ENCODE measurements at regions of chr17 and their contacts with region 1.

Region 1: DNA sequence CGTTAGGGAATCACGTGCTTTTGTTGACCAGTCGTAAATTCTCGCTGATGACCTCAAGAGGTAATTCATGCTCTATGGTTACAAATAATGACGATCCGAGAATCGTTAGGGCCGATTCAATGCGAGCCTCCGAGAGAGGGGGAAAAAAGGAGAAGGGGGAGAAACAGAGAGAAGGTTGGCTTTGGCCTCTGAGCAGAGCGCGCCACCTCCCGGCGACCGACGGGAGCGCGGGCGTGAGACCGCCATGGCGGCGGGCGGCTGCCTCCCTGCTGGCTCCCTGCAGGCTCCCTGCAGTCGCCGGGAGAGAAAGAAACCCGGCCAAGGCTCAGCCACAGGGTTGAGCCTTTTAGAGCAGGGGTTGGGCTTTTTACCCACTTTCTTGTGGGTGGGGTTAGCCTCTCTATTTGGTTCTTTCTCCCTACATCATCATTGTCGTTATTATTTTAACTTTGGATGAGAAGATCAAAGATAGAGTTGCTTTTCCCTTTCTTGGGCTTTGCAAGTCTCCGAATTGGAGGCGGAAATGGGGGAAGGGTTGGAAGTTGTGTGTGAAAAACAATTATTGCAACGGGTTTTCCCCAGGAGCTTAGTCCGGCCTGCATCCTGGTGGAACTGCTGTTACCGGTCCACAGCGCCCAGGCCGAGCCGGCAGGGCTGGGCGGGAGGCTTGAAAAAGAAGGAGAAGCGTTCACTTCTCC is 410 bp upstream of the HOXB5 start:
- DNase-seq: peak; percentile 94 to 97 (median 97)
- H3K4me3 ChIP-seq: peak overlapping the region; percentile 2 to 69 (median 67)
- H3K27ac ChIP-seq: peak overlapping the region; percentile 88 to 90
- H3K4me1 ChIP-seq: peaks cover 0 to 9% (median 5%) of the 10 kb centered on the region in 3 donors
- H3K27me3 ChIP-seq: no peaks in the 10 kb centered on the region
- CTCF ChIP-seq: peak; percentile 89

Region 2: GRCh38 chr17:48335858-48336500 is 258.0 kb before region 1 on chr17:
- intact Hi-C with region 1: loop called (anchors 10 kb)
- DNase-seq: peak in 2 of 5 donors; percentile 90 to 94
- H3K4me3 ChIP-seq: no peak overlapping the region
- H3K27ac ChIP-seq: no peak overlapping the region
- H3K4me1 ChIP-seq: peaks cover 0 to 4% (median 0%) of the 10 kb centered on the region in 3 donors
- H3K27me3 ChIP-seq: no peaks in the 10 kb centered on the region
- CTCF ChIP-seq: peak; percentile 66

Region 3: DNA sequence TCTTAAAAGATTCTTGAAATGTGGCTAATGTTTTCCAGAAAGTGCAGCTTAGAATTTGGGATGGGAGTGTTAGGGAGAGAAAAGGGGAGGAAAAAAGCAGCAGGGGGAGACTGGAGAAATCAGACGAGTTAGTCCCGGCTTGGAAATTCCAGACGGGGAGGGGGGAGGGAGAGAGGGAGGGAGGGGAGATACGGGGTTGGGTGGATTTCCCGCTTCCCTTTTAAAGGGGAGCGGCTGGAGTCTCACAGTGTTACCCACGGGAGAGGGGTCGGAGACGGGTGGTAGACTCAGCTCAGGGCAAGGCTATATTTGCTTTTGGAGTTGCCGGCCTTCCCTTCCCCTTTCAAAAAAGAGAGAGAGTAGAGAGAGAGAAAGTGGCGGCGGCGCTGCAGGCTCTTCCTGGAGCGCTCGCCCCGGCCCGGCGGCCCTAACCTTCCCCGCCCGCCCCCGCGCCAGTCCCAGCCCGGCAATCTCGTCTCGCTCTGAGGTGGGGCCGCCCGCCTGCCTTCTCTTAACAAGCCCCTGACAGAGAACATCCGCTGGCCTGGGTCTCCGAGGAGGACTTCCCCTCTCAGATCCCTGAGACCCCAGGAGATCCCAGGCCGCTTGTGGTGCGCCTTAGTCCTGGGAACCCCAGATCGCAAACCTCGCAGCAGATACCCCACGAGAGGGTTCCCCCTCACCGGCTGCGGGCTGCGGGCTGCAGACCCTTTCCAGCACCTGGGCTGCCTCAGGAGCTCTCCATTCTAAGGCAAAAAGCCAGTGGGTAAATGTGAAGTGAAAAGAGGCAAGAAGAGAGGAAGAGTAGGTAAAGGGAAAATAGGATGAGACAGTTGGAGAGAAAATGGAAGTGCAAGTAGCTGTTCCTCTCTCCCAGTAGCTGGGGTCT is 409.9 kb after region 1 on chr17:
- intact Hi-C with region 1: no loop called
- DNase-seq: peak in 4 of 5 donors; percentile 59 to 84 (median 76)
- H3K4me3 ChIP-seq: peak overlapping the region in 1 of 3 donors; percentile 52
- H3K27ac ChIP-seq: no peak overlapping the region
- H3K4me1 ChIP-seq: no peaks in the 10 kb centered on the region
- H3K27me3 ChIP-seq: peaks cover 12% of the 10 kb centered on the region
- CTCF ChIP-seq: no peak

Measured in kidney (tissue), 22 donors.